Activated CD8-positive, alpha-beta T cell treated with anti-CD3 and anti-CD28 coated beads for 36 hours (primary cell): ENCODE measurements at regions of chr12 and their contacts with region 1.

Region 1: GRCh38 chr12:121992059-121992879 is 29.4 kb upstream of the BCL7A start:
- DNase-seq: peak; percentile 84
- ATAC-seq: peak; percentile 99
- H3K4me3 Mint-ChIP-seq: peak overlapping the region; percentile 54
- H3K27ac Mint-ChIP-seq: peak overlapping the region; percentile 88
- H3K4me1 Mint-ChIP-seq: peaks cover 17% of the 10 kb centered on the region
- H3K27me3 Mint-ChIP-seq: peaks cover 1% of the 10 kb centered on the region
- CTCF ChIP-seq: no peak

Region 2: DNA sequence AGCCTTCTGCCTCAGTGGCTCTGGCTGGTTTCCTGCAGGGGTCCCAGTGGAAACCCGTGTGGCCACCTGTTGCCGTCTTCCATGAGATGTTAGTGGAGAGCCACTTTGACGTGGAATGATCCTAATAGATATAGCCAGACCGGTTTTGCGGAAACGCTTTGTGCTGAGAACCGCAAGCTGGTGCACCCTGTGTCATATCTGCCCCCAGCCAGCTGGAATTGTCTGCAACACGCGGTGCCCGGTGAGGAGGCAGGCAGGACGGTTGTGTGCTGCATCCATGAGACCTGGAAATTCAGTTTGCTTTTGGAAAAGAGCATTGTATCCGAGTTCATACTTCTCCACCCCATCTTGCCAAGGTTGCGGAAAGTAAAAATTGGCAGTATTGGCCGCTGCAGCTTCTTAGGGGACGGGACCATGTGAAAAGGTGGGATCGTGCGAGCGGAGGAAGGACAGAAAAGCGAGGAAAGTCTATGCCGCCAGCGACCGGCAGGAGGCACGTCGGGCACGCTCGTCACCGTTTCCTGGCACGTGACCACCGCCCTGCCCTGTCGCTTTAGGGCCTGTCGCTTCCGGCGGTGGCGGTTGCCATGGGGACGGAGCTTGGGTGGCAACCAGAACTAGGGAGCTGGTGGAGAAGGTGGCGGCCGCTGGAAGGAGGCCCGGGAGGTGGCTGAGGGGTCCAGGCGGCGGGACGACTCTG is 74.1 kb before region 1 on chr12 and contains the start of gene CFAP251:
- CTCF ChIA-PET with region 1: interaction called, 11 read pairs
- POLR2A ChIA-PET with region 1: interaction called, 4 read pairs
- intact Hi-C with region 1: no loop called
- DNase-seq: peak; percentile 99
- ATAC-seq: peak; percentile 98
- H3K4me3 Mint-ChIP-seq: peak within 1 kb of the TSS; percentile 76
- H3K27ac Mint-ChIP-seq: peak within 1 kb of the TSS; percentile 89
- H3K4me1 Mint-ChIP-seq: peaks cover 12% of the 10 kb centered on the region
- H3K27me3 Mint-ChIP-seq: no peaks in the 10 kb centered on the region
- CTCF ChIP-seq: peak; percentile 66
- total RNA-seq, gene CFAP251: 2.0 to 2.9 TPM

Region 3: GRCh38 chr12:121933522-121934308 is 58.6 kb before region 1 on chr12:
- CTCF ChIA-PET with region 1: no interaction called
- POLR2A ChIA-PET with region 1: no interaction called
- intact Hi-C with region 1: no loop called
- DNase-seq: no peak
- ATAC-seq: no peak
- H3K4me3 Mint-ChIP-seq: no peak overlapping the region
- H3K27ac Mint-ChIP-seq: no peak overlapping the region
- H3K4me1 Mint-ChIP-seq: peaks cover 4% of the 10 kb centered on the region
- H3K27me3 Mint-ChIP-seq: peaks cover 2% of the 10 kb centered on the region
- CTCF ChIP-seq: no peak

Region 4: DNA sequence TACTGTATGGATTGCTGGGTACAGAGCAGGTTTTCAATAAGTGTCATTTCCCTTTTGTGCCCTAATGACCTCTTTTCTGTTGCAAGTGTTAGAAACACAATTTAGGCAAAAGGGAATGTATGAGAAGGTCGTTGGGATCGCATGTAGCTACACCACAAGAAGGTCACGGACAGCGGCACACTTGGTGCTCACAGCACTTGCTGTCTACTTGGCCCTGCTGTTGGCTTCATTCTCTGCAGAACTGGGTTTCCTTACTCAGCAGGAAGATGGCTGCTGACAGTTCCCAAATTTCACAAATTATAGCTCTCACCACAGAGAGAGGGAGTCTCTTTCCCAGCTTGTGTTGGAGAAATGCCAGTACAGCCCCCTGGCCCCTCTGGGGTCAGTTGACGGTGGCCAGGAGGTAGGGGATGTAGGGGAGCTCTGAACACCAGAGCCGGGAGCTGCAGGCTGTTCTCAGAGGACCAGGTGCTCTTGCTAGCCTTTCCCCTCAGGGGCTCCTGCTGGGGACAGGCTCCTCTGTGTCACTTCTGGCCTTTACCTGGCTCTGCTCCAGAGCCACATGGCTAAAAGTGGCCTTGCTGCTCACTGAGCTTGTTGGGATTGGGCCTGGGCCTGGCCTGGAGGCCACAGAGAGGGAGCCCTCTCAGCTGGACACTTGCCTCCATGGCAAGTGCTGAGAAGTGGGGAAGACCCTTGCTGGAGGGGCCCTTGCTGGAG is 21.5 kb before region 1 on chr12:
- CTCF ChIA-PET with region 1: no interaction called
- POLR2A ChIA-PET with region 1: no interaction called
- intact Hi-C with region 1: no loop called
- DNase-seq: no peak
- ATAC-seq: no peak
- H3K4me3 Mint-ChIP-seq: no peak overlapping the region
- H3K27ac Mint-ChIP-seq: no peak overlapping the region
- H3K4me1 Mint-ChIP-seq: no peaks in the 10 kb centered on the region
- H3K27me3 Mint-ChIP-seq: no peaks in the 10 kb centered on the region
- CTCF ChIP-seq: no peak

Region 5: GRCh38 chr12:122021822-122022526 is 29.7 kb after region 1 on chr12 and contains the start of gene BCL7A:
- CTCF ChIA-PET with region 1: interaction called, 3 read pairs
- POLR2A ChIA-PET with region 1: interaction called, 11 read pairs
- intact Hi-C with region 1: no loop called
- DNase-seq: peak; percentile 70
- ATAC-seq: peak; percentile 85
- H3K4me3 Mint-ChIP-seq: peak within 1 kb of the TSS; percentile 92
- H3K27ac Mint-ChIP-seq: peak within 1 kb of the TSS; percentile 87
- H3K4me1 Mint-ChIP-seq: peaks cover 11% of the 10 kb centered on the region
- H3K27me3 Mint-ChIP-seq: peaks cover 13% of the 10 kb centered on the region
- CTCF ChIP-seq: no peak
- total RNA-seq, gene BCL7A: 6.7 to 7.3 TPM

Region 6: DNA sequence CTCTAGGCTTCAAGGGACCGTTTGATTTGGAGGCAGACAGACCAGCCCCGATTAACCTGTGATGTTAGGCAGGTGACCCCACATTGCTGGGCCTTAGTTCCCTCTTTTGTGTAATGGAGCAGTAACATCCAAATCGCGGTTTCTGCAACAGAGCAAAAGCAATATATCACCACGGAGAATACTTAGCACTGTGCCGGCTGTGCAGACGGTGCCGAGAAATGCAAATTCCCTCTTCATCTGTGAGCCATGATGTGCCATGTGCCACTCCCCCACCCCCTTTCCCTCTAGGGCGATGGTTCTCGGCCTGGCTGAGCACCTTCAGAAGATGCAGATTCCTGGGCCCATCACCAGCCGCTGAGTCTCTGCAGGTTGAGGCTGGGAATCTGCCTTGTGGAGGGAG is 40.3 kb after region 1 on chr12:
- CTCF ChIA-PET with region 1: no interaction called
- POLR2A ChIA-PET with region 1: no interaction called
- intact Hi-C with region 1: no loop called
- DNase-seq: no peak
- ATAC-seq: no peak
- H3K4me3 Mint-ChIP-seq: no peak overlapping the region
- H3K27ac Mint-ChIP-seq: no peak overlapping the region
- H3K4me1 Mint-ChIP-seq: peaks cover 19% of the 10 kb centered on the region
- H3K27me3 Mint-ChIP-seq: peaks cover 2% of the 10 kb centered on the region
- CTCF ChIP-seq: no peak

Region 7: DNA sequence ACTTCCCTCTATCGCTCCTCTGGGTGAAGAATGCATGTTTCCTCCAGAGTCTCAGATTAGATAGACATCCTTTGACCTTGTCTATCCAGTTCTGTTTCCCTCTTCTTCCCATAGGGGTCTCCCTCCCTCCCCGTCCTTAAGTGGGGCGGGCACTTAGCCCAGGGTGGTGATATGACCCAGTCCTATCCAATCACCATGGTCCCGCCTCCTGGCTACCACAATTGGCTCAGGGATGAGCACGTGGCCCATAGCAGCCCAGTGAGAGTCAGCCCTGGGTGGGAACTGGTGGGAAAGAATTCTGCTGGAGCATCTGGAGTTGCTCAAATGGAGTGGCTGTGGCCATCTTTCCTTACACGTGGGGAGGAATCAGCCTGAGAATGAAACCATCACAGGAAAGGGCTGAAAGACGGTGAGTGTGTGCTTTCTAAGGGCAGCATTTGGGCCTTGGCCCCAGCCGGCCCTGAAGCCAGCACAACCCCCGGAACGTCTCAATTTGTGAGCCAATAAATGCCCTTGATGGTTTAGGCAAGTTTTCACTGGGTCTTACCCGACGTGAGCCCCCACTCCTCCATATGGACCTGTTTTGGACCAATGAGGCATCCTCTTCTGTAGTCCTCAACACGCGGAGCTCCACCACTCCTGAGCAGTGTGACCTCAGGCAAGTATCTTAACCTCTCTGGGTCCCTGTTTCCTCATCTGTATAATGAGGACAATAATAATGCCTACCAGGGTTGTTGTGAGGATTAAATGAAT is 71.9 kb after region 1 on chr12:
- CTCF ChIA-PET with region 1: no interaction called
- POLR2A ChIA-PET with region 1: no interaction called
- intact Hi-C with region 1: no loop called
- DNase-seq: peak; percentile 74
- ATAC-seq: peak; percentile 95
- H3K4me3 Mint-ChIP-seq: no peak overlapping the region
- H3K27ac Mint-ChIP-seq: no peak overlapping the region
- H3K4me1 Mint-ChIP-seq: peaks cover 17% of the 10 kb centered on the region
- H3K27me3 Mint-ChIP-seq: no peaks in the 10 kb centered on the region
- CTCF ChIP-seq: no peak